ENCODE measurements at regions of chr5 and their contacts with region 1.

Region 1: DNA sequence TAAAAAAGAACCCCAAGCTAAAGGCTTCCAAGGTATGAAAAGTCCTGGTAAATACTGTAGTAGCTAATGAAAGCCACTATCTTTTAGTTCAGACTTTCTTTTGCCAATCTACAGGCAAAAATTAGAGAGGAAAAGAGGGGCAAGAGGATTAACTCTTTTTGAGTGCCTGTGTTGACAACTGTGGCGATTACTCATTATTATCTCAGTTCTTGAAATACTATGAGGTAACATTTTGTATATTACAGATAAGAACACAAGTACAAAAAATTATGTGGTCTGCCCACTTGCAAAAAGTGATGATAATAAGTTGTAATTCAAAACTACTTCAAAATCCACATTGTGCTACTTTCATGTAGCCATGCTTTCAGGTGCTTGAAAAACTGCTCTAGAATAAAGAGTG is 144.0 kb downstream of the DTWD2 start:
- DNase-seq: no peak
- ATAC-seq: no peak
- H3K4me3 ChIP-seq: no peak overlapping the region
- H3K4me3 Mint-ChIP-seq: no peak overlapping the region
- H3K27ac ChIP-seq: no peak overlapping the region
- H3K27ac Mint-ChIP-seq: no peak overlapping the region
- H3K4me1 ChIP-seq: no peaks in the 10 kb centered on the region
- H3K4me1 Mint-ChIP-seq: no peaks in the 10 kb centered on the region
- H3K27me3 ChIP-seq: no peaks in the 10 kb centered on the region
- H3K27me3 Mint-ChIP-seq: no peaks in the 10 kb centered on the region
- CTCF ChIP-seq: no peak

Region 2: GRCh38 chr5:117568622-117569021 is 1275.7 kb before region 1 on chr5:
- CTCF ChIA-PET with region 1: no interaction called
- POLR2A ChIA-PET with region 1: interaction called, 16 read pairs
- intact Hi-C with region 1: no loop called
- DNase-seq: no peak
- ATAC-seq: no peak
- H3K4me3 ChIP-seq: no peak overlapping the region
- H3K4me3 Mint-ChIP-seq: no peak overlapping the region
- H3K27ac ChIP-seq: no peak overlapping the region
- H3K27ac Mint-ChIP-seq: no peak overlapping the region
- H3K4me1 ChIP-seq: no peaks in the 10 kb centered on the region
- H3K4me1 Mint-ChIP-seq: no peaks in the 10 kb centered on the region
- H3K27me3 ChIP-seq: no peaks in the 10 kb centered on the region
- H3K27me3 Mint-ChIP-seq: no peaks in the 10 kb centered on the region
- CTCF ChIP-seq: no peak

Measured in B cell (primary cell).